ENCODE measurements at regions of chr3 and their contacts with region 1.

Region 1: GRCh38 chr3:88003115-88003755 is 55.6 kb downstream of the CGGBP1 start:
- DNase-seq: peak in 2 of 5 donors; percentile 28 to 32
- H3K4me3 ChIP-seq: no peak overlapping the region
- H3K4me3 Mint-ChIP-seq: no peak overlapping the region
- H3K27ac ChIP-seq: no peak overlapping the region
- H3K27ac Mint-ChIP-seq: no peak overlapping the region
- H3K4me1 ChIP-seq: peaks cover 5% of the 10 kb centered on the region
- H3K4me1 Mint-ChIP-seq: peaks cover 0 to 10% (median 7%) of the 10 kb centered on the region in 4 donors
- H3K27me3 ChIP-seq: no peaks in the 10 kb centered on the region
- H3K27me3 Mint-ChIP-seq: no peaks in the 10 kb centered on the region

Region 2: DNA sequence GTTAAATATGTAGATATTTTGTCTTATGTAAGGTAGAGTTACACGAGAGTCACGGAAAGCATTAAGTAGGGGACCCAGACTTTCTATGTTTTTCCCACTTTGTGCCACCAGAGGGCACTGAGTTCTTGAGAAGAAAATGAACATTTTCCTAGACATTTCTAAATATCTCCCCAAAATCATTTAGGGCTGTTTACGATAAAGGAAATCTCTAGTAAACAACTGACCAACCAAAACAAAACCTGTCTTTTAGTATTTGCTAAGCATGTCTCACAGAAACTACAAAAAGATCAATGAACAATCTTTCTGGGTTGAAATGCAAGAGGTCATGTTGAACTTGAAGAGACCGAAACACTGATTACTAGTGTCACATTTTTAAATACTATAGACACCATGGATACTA is 743.0 kb before region 1 on chr3:
- CTCF ChIA-PET with region 1: interaction called, 3 read pairs
- POLR2A ChIA-PET with region 1: no interaction called
- intact Hi-C with region 1: loop called (anchors 1 kb)
- DNase-seq: peak; percentile 18 to 45 (median 33)
- H3K4me3 ChIP-seq: no peak overlapping the region
- H3K4me3 Mint-ChIP-seq: no peak overlapping the region
- H3K27ac ChIP-seq: no peak overlapping the region
- H3K27ac Mint-ChIP-seq: no peak overlapping the region
- H3K4me1 ChIP-seq: no peaks in the 10 kb centered on the region
- H3K4me1 Mint-ChIP-seq: no peaks in the 10 kb centered on the region
- H3K27me3 ChIP-seq: no peaks in the 10 kb centered on the region
- H3K27me3 Mint-ChIP-seq: no peaks in the 10 kb centered on the region

Region 3: DNA sequence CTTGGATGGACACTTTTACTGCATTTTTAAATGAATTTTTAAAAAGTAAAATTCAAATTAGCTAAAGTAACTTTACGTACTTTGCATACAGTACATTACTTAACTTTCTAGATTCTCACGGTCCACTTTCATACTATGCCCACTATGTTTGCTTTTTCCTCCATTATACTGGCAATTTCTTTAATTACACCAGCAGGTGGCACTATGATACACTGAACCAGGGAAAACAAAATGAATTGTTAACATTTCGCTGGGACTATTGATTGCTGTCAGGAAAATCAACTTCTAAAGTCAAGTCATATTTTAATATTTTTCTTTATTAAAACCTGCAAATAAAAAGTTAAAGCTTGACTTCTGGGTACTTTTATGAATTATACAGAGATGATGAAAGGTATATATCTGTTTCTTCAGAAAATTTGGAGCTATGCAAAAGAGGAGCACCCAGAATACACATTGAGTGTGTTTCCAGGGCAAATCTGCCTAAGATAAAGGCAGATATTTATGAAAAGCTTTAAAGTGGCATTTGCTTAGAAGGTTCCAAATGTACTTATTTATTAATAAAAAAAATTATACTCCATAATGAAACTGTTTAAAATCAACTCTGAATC is 705.0 kb before region 1 on chr3:
- CTCF ChIA-PET with region 1: interaction called, 13 read pairs
- POLR2A ChIA-PET with region 1: no interaction called
- intact Hi-C with region 1: loop called (anchors 1 kb)
- DNase-seq: peak in 4 of 5 donors; percentile 25 to 36 (median 31)
- H3K4me3 ChIP-seq: no peak overlapping the region
- H3K4me3 Mint-ChIP-seq: no peak overlapping the region
- H3K27ac ChIP-seq: no peak overlapping the region
- H3K27ac Mint-ChIP-seq: no peak overlapping the region
- H3K4me1 ChIP-seq: no peaks in the 10 kb centered on the region
- H3K4me1 Mint-ChIP-seq: peaks cover 0 to 2% (median 0%) of the 10 kb centered on the region in 4 donors
- H3K27me3 ChIP-seq: no peaks in the 10 kb centered on the region
- H3K27me3 Mint-ChIP-seq: peaks cover 0 to 3% of the 10 kb centered on the region in 2 donors

Region 4: GRCh38 chr3:87350364-87351199 is 652.7 kb before region 1 on chr3:
- CTCF ChIA-PET with region 1: interaction called, 47 read pairs
- POLR2A ChIA-PET with region 1: no interaction called
- intact Hi-C with region 1: loop called (anchors 1 kb)
- DNase-seq: peak in 4 of 5 donors; percentile 46 to 54 (median 52)
- H3K4me3 ChIP-seq: no peak overlapping the region
- H3K4me3 Mint-ChIP-seq: no peak overlapping the region
- H3K27ac ChIP-seq: no peak overlapping the region
- H3K27ac Mint-ChIP-seq: no peak overlapping the region
- H3K4me1 ChIP-seq: no peaks in the 10 kb centered on the region
- H3K4me1 Mint-ChIP-seq: no peaks in the 10 kb centered on the region
- H3K27me3 ChIP-seq: no peaks in the 10 kb centered on the region
- H3K27me3 Mint-ChIP-seq: peaks cover 2 to 3% of the 10 kb centered on the region in 2 donors

Region 5: DNA sequence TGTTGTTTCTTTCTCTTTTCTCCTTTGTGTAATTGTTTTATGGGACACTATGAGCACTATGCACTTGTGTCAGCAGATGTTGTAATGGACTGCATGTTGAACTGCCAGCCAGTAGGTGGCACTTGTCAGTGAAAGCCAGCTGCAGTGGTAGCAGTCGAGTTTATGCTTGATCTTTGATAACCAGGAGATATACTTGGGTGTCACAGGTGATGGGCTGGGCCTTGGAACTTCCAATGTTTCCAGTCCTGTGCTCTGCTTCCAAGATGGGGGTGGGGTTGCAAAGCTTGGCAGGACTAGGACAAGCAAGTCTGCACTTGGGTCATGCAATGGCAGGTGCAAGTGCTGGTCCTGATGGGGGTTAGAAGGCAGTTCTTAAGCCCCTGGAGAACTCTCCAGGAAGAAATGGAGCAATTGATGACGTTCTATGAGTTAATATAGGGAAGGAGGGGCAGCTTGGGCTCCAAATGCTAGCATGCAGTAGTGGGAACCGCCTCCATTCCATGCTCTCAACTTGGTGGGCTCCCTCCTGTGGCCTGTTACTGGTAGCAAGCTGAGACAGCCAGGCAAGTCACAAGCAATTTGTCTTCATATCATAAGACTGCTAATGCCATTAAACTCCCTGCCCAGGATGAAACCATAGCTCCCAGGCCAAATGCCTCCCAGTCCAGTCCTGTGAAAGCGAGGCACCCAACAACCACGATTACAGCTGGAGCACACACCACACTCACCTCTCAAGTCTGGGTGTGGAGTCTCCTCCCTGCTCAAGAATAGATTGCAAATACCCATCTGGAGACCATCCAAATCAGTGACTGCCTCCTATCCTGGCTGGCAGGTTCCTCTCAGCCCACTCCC is 231.7 kb before region 1 on chr3:
- CTCF ChIA-PET with region 1: interaction called, 6 read pairs
- POLR2A ChIA-PET with region 1: no interaction called
- intact Hi-C with region 1: loop called (anchors 1 kb)
- DNase-seq: peak; percentile 27 to 39 (median 32)
- H3K4me3 ChIP-seq: no peak overlapping the region
- H3K4me3 Mint-ChIP-seq: no peak overlapping the region
- H3K27ac ChIP-seq: no peak overlapping the region
- H3K27ac Mint-ChIP-seq: no peak overlapping the region
- H3K4me1 ChIP-seq: no peaks in the 10 kb centered on the region
- H3K4me1 Mint-ChIP-seq: peaks cover 0 to 2% (median 0%) of the 10 kb centered on the region in 4 donors
- H3K27me3 ChIP-seq: no peaks in the 10 kb centered on the region
- H3K27me3 Mint-ChIP-seq: peaks cover 4 to 16% of the 10 kb centered on the region in 2 donors

Region 6: DNA sequence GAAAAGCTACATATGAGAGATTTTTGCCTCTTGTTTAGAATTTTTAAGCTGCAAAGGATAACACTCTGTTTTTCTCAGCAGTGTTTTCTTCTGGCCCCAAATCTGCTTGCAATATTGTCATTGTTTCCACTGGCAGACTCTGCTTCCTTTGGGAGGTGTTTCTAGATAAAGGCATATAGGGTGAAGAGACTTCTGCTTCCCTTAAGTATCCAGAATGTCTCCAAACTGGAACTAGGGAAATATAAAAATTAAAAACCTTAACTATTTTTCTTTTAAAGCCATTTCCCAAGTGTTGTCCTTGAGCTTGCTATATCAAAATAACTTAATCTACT is 170.2 kb before region 1 on chr3:
- CTCF ChIA-PET with region 1: no interaction called
- POLR2A ChIA-PET with region 1: no interaction called
- intact Hi-C with region 1: no loop called
- DNase-seq: no peak
- H3K4me3 ChIP-seq: no peak overlapping the region
- H3K4me3 Mint-ChIP-seq: no peak overlapping the region
- H3K27ac ChIP-seq: no peak overlapping the region
- H3K27ac Mint-ChIP-seq: no peak overlapping the region
- H3K4me1 ChIP-seq: no peaks in the 10 kb centered on the region
- H3K4me1 Mint-ChIP-seq: no peaks in the 10 kb centered on the region
- H3K27me3 ChIP-seq: no peaks in the 10 kb centered on the region
- H3K27me3 Mint-ChIP-seq: peaks cover 0 to 2% of the 10 kb centered on the region in 2 donors

Region 7: GRCh38 chr3:88031642-88032077 is 28.4 kb after region 1 on chr3:
- CTCF ChIA-PET with region 1: interaction called, 5 read pairs
- POLR2A ChIA-PET with region 1: interaction called, 3 read pairs
- intact Hi-C with region 1: loop called (anchors 2 kb)
- DNase-seq: peak in 4 of 5 donors; percentile 49 to 62 (median 58)
- H3K4me3 ChIP-seq: peak overlapping the region; percentile 52 to 54
- H3K4me3 Mint-ChIP-seq: peak overlapping the region; percentile 78 to 92 (median 90)
- H3K27ac ChIP-seq: peak overlapping the region; percentile 61
- H3K27ac Mint-ChIP-seq: peak overlapping the region; percentile 80 to 98 (median 96)
- H3K4me1 ChIP-seq: peaks cover 19% of the 10 kb centered on the region
- H3K4me1 Mint-ChIP-seq: peaks cover 22 to 41% (median 32%) of the 10 kb centered on the region in 4 donors
- H3K27me3 ChIP-seq: no peaks in the 10 kb centered on the region
- H3K27me3 Mint-ChIP-seq: no peaks in the 10 kb centered on the region

Region 8: GRCh38 chr3:88058591-88059368 is 55.5 kb after region 1 on chr3 and contains the starts of genes CGGBP1 and ZNF654:
- CTCF ChIA-PET with region 1: interaction called, 4 read pairs
- POLR2A ChIA-PET with region 1: no interaction called
- intact Hi-C with region 1: loop called (anchors 1 kb)
- DNase-seq: peak; percentile 99 to 100 (median 99)
- H3K4me3 ChIP-seq: peak within 1 kb of the TSS; percentile 73 to 92
- H3K4me3 Mint-ChIP-seq: peak within 1 kb of the TSS; percentile 94 to 99 (median 98)
- H3K27ac ChIP-seq: peak within 1 kb of the TSS; percentile 75
- H3K27ac Mint-ChIP-seq: peak within 1 kb of the TSS; percentile 95 to 99 (median 98)
- H3K4me1 ChIP-seq: peaks cover 66% of the 10 kb centered on the region
- H3K4me1 Mint-ChIP-seq: peaks cover 36 to 84% (median 54%) of the 10 kb centered on the region in 4 donors
- H3K27me3 ChIP-seq: no peaks in the 10 kb centered on the region
- H3K27me3 Mint-ChIP-seq: no peaks in the 10 kb centered on the region
- total RNA-seq, gene CGGBP1: 142 to 159 TPM
- total RNA-seq, gene ZNF654: 26.8 to 30.3 TPM